Left ventricle myocardium superior (tissue), 1 donor: ENCODE measurements at regions of chr17 and their contacts with region 1.

Region 1: DNA sequence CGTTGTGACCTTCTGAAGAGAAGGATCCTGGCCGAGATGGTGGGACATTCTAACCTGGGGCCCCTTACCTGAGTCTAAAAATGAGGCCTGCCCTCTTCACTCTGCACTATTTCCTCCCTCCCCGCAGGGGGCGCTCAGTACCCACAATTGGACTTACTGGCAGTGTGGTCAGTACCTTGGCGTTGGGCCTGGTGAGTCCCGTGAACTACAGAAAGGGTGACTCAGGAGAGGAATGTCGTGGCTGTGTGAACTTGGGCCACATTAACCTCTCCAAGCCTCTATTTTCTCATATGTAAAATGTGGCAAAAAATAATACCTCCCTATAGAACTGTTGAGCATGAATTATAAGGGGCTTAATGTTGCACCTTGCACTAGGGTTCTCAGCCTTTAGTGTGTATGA is 3.9 kb downstream of the RSAD1 start:
- DNase-seq: peak; percentile 95
- ATAC-seq: peak; percentile 64

Region 2: GRCh38 chr17:50397111-50397918 is 85.2 kb before region 1 on chr17 and contains the start of gene LRRC59:
- intact Hi-C with region 1: no loop called
- DNase-seq: peak; percentile 94
- ATAC-seq: peak; percentile 99
- total RNA-seq, gene LRRC59: 22.8 TPM

Region 3: GRCh38 chr17:50541716-50542688 is 59.5 kb after region 1 on chr17:
- intact Hi-C with region 1: loop called (anchors 5 kb)
- DNase-seq: peak; percentile 94
- ATAC-seq: peak; percentile 93